Right lobe of liver (tissue), 6 donors: ENCODE measurements at regions of chrX and their contacts with region 1.

Region 1: GRCh38 chrX:7996414-7996813 is 69.2 kb upstream of the PNPLA4 start:
- DNase-seq: no peak
- ATAC-seq: peak; percentile 60 to 78 (median 74)
- H3K4me3 ChIP-seq: no peak overlapping the region
- H3K27ac ChIP-seq: no peak overlapping the region
- H3K4me1 ChIP-seq: no peaks in the 10 kb centered on the region
- H3K27me3 ChIP-seq: no peaks in the 10 kb centered on the region
- CTCF ChIP-seq: peak; percentile 69 to 78 (median 73)
- POLR2A ChIP-seq: no peak

Region 2: DNA sequence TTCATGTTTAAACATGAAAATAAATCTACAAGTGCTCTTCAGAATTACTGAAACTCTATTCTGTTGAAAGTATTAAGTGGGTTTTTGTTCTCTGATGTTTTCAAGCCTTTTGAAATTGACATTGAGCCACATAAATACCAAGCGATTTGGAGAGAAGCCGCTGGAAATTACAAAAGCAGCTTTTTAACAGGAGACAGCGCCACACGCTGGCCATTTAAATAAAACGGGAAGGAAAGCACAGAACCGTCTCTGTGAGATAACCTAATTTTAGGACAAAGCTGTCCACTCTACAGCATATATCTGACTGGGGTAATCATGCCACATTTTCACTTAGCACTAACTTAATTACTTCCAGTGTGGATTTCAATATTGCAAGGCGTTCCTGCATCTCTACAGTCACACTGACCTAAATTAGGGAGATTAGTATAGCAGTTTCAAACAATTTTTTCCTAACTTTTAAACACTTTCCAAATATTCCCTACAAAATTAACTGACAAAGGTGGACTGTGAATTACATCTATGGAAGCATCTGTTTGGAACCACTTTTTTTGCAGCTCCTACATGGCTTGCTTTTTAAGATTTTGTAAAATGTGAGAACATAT is 742.3 kb after region 1 on chrX:
- intact Hi-C with region 1: loop called in 1 of 2 experiments (anchors 10 kb)
- DNase-seq: peak in 1 of 3 donors; percentile 35
- ATAC-seq: peak; percentile 60 to 76 (median 74)
- H3K4me3 ChIP-seq: no peak overlapping the region
- H3K27ac ChIP-seq: no peak overlapping the region
- H3K4me1 ChIP-seq: no peaks in the 10 kb centered on the region
- H3K27me3 ChIP-seq: no peaks in the 10 kb centered on the region
- CTCF ChIP-seq: peak; percentile 71 to 75 (median 72)
- POLR2A ChIP-seq: no peak